Right lobe of liver (tissue), 6 donors: ENCODE measurements at regions of chr17 and their contacts with region 1.

Region 1: DNA sequence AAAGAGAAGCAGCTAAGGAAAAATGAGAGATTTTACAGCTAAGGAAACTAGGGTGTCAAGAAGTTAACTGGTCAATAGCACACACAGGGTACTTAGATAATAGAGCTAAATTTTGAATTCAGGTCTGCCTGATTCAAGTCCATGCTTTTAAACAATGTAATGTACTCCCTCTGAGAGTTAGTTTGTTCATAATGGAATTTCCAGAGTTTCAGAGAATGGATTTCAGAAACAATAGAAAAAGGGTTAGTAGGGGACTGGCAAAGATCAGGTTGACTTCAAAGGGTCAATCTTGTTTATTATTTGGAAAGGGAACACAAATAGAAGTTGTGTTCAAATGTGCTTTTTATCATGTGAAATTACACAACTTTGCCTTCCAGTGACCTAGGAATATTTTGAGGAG is 17.9 kb downstream of the NSRP1 start:
- DNase-seq: no peak
- ATAC-seq: no peak
- H3K4me3 ChIP-seq: no peak overlapping the region
- H3K27ac ChIP-seq: no peak overlapping the region
- H3K4me1 ChIP-seq: no peaks in the 10 kb centered on the region
- H3K27me3 ChIP-seq: no peaks in the 10 kb centered on the region
- CTCF ChIP-seq: no peak
- POLR2A ChIP-seq: no peak

Region 2: GRCh38 chr17:30187573-30187972 is 53.0 kb after region 1 on chr17:
- intact Hi-C with region 1: loop called in 1 of 2 experiments (anchors 10 kb)
- DNase-seq: no peak
- ATAC-seq: no peak
- H3K4me3 ChIP-seq: no peak overlapping the region
- H3K27ac ChIP-seq: no peak overlapping the region
- H3K4me1 ChIP-seq: no peaks in the 10 kb centered on the region
- H3K27me3 ChIP-seq: no peaks in the 10 kb centered on the region
- CTCF ChIP-seq: no peak
- POLR2A ChIP-seq: no peak